ENCODE measurements at regions of chr4 and their contacts with region 1.

Region 1: GRCh38 chr4:113355550-113356371 is 306.3 kb downstream of the ANK2 start:
- DNase-seq: peak; percentile 88
- H3K4me3 Mint-ChIP-seq: peak overlapping the region; percentile 36
- H3K27ac Mint-ChIP-seq: peak overlapping the region; percentile 92
- H3K4me1 Mint-ChIP-seq: peaks cover 39% of the 10 kb centered on the region
- H3K27me3 Mint-ChIP-seq: peaks cover 45% of the 10 kb centered on the region

Region 2: DNA sequence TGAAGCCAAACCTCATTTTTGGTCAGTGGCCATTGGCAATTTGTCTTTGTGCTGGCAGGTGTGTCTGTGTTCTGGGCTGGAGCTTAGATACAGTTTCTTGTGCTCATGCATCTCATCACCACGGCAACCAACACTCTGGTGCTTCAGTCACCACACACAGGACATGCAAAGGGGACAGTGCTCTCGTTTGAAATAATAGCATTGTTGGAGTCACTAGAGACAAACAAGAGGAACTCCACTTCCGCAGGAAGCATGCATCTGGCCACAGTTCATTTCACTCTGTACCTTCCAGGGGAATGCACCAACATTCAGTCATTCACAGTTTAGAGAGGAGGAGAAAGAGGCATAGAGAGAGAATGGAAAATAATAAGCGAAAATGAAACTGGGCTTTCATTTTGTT is 38.9 kb before region 1 on chr4:
- CTCF ChIA-PET with region 1: no interaction called
- POLR2A ChIA-PET with region 1: no interaction called
- intact Hi-C with region 1: loop called (anchors 1 kb)
- DNase-seq: peak; percentile 27
- H3K4me3 Mint-ChIP-seq: no peak overlapping the region
- H3K27ac Mint-ChIP-seq: no peak overlapping the region
- H3K4me1 Mint-ChIP-seq: peaks cover 11% of the 10 kb centered on the region
- H3K27me3 Mint-ChIP-seq: peaks cover 2% of the 10 kb centered on the region

Region 3: GRCh38 chr4:113383111-113383785 is 27.5 kb after region 1 on chr4:
- CTCF ChIA-PET with region 1: interaction called, 7 read pairs
- POLR2A ChIA-PET with region 1: no interaction called
- intact Hi-C with region 1: loop called (anchors 1 kb)
- DNase-seq: no peak
- H3K4me3 Mint-ChIP-seq: no peak overlapping the region
- H3K27ac Mint-ChIP-seq: no peak overlapping the region
- H3K4me1 Mint-ChIP-seq: peaks cover 15% of the 10 kb centered on the region
- H3K27me3 Mint-ChIP-seq: peaks cover 9% of the 10 kb centered on the region

Region 4: DNA sequence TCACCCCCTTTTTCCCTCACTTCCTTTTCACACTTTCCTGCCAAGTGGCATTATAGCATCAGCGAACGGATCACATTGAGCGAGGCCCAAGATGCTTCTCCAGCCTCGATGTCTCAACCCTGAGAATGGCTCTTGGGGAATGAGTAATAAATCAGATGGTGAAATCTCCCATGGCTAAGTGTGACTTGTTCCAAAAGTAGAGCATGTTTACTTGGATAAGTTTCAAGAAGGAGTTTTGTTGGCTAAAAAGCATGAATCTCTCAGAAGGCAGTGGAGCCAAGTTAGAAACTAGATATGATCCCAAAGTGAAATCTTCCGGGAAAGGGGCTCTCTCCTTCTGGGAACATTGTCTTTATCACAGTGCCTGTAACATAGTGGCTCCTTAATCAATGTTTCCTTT is 89.5 kb after region 1 on chr4:
- CTCF ChIA-PET with region 1: no interaction called
- POLR2A ChIA-PET with region 1: no interaction called
- intact Hi-C with region 1: loop called (anchors 2 kb)
- DNase-seq: peak; percentile 19
- H3K4me3 Mint-ChIP-seq: no peak overlapping the region
- H3K27ac Mint-ChIP-seq: peak overlapping the region; percentile 64
- H3K4me1 Mint-ChIP-seq: peaks cover 26% of the 10 kb centered on the region
- H3K27me3 Mint-ChIP-seq: no peaks in the 10 kb centered on the region

Region 5: GRCh38 chr4:113474017-113474416 is 118.3 kb after region 1 on chr4:
- CTCF ChIA-PET with region 1: no interaction called
- POLR2A ChIA-PET with region 1: no interaction called
- intact Hi-C with region 1: loop called (anchors 1 kb)
- DNase-seq: peak; percentile 39
- H3K4me3 Mint-ChIP-seq: no peak overlapping the region
- H3K27ac Mint-ChIP-seq: peak overlapping the region; percentile 84
- H3K4me1 Mint-ChIP-seq: peaks cover 51% of the 10 kb centered on the region
- H3K27me3 Mint-ChIP-seq: no peaks in the 10 kb centered on the region